Activated CD4-positive, alpha-beta T cell treated with anti-CD3 and anti-CD28 coated beads for 36 hours (primary cell): ENCODE measurements at regions of chr12 and their contacts with region 1.

Region 1: GRCh38 chr12:49018261-49019119 is at the start of gene PRKAG1:
- DNase-seq: peak; percentile 97
- ATAC-seq: peak; percentile 87
- H3K4me3 Mint-ChIP-seq: peak within 1 kb of the TSS; percentile 81
- H3K27ac Mint-ChIP-seq: peak within 1 kb of the TSS; percentile 97
- H3K4me1 Mint-ChIP-seq: peaks cover 34% of the 10 kb centered on the region
- H3K27me3 Mint-ChIP-seq: no peaks in the 10 kb centered on the region
- total RNA-seq, gene PRKAG1: 54.5 to 62.6 TPM

Region 2: GRCh38 chr12:48838048-48838447 is 180.4 kb before region 1 on chr12:
- CTCF ChIA-PET with region 1: no interaction called
- POLR2A ChIA-PET with region 1: no interaction called
- intact Hi-C with region 1: no loop called
- DNase-seq: no peak
- ATAC-seq: no peak
- H3K4me3 Mint-ChIP-seq: no peak overlapping the region
- H3K27ac Mint-ChIP-seq: no peak overlapping the region
- H3K4me1 Mint-ChIP-seq: no peaks in the 10 kb centered on the region
- H3K27me3 Mint-ChIP-seq: no peaks in the 10 kb centered on the region

Region 3: GRCh38 chr12:48924617-48925303 is 93.7 kb before region 1 on chr12:
- CTCF ChIA-PET with region 1: interaction called, 3 read pairs
- POLR2A ChIA-PET with region 1: no interaction called
- intact Hi-C with region 1: loop called in 1 of 2 experiments (anchors 2 kb)
- DNase-seq: peak; percentile 85
- ATAC-seq: peak; percentile 75
- H3K4me3 Mint-ChIP-seq: peak overlapping the region; percentile 83
- H3K27ac Mint-ChIP-seq: peak overlapping the region; percentile 93
- H3K4me1 Mint-ChIP-seq: peaks cover 52% of the 10 kb centered on the region
- H3K27me3 Mint-ChIP-seq: no peaks in the 10 kb centered on the region

Region 4: GRCh38 chr12:49000346-49000745 is 18.1 kb before region 1 on chr12:
- CTCF ChIA-PET with region 1: interaction called, 20 read pairs
- POLR2A ChIA-PET with region 1: interaction called, 4 read pairs
- intact Hi-C with region 1: loop called (anchors 1 to 2 kb)
- DNase-seq: no peak
- ATAC-seq: no peak
- H3K4me3 Mint-ChIP-seq: no peak overlapping the region
- H3K27ac Mint-ChIP-seq: no peak overlapping the region
- H3K4me1 Mint-ChIP-seq: peaks cover 22% of the 10 kb centered on the region
- H3K27me3 Mint-ChIP-seq: peaks cover 37% of the 10 kb centered on the region

Region 5: DNA sequence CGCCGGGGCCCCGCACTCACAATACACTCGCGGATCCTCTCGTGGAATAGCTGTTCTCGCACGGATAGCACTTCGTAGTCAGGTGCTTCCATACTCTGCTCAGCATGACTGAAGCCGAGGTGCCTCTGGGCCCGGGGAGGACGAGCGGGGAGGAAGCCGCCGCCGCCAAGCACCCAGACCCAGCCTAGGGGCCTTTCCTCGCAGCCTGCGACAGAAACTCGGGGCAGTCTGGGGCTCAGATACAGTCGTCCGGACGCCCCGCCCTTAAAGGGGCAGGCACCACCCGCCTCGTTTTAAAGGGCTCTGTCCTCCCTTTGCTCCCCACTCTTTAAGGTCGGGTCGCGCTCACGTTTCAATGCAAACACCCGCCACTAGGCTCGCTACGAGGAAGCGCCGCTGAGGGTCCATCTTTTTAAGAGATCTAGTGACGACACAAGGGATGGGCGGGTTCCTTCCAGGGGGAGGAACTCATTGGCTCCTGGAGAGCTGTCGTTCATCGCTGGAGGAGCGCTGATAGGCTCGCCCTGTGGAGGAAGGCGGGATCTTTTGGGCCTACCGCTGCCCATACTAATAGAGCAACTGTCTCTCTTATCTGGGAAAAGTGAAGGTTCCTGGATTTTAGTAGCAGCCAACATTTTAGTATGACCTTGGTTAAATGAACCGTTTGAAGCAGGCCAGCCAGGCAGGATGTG is 92.1 kb after region 1 on chr12 and contains the start of gene LMBR1L:
- CTCF ChIA-PET with region 1: interaction called, 3 read pairs
- POLR2A ChIA-PET with region 1: no interaction called
- intact Hi-C with region 1: loop called in 1 of 2 experiments (anchors 1 kb)
- DNase-seq: peak; percentile 97
- ATAC-seq: peak; percentile 98
- H3K4me3 Mint-ChIP-seq: peak within 1 kb of the TSS; percentile 96
- H3K27ac Mint-ChIP-seq: peak within 1 kb of the TSS; percentile 98
- H3K4me1 Mint-ChIP-seq: peaks cover 29% of the 10 kb centered on the region
- H3K27me3 Mint-ChIP-seq: no peaks in the 10 kb centered on the region
- total RNA-seq, gene LMBR1L: 45.0 to 48.0 TPM

Region 6: DNA sequence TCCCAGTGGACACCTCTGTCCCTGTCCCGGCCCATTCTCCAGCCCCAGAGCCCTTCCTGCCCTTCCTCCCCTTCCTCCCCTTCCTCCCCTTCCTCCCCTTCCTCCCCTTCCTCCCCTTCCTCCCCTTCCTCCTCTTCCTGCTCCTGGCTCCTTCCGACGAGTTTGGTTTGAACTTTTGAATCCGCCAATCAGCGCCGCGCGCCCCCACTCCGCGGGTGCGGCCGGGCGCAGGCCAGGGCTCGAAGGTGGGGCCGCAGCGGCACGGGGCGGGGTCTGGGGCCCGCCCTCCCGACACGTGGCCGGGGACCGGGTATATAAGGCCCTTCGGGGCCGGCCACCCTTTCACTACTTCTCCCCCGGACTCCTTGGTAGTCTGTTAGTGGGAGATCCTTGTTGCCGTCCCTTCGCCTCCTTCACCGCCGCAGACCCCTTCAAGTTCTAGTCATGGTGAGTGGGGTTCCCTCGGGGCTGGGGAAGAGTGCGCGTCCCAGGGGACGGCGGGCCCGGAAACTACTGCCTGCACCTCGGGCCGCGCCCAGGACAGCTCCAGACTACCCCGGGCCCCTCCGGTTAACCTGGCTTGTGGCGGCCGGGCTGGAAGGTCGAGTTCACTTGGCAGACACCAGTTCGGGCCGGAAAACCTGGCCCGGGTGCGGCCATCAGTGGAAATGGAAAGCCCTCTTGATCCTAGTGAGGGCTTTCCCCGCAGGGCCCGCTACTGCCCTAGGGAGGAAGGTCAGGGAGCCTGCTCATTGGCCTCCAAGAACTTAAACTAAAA is 246.4 kb after region 1 on chr12 and contains the start of gene TUBA1C:
- CTCF ChIA-PET with region 1: no interaction called
- POLR2A ChIA-PET with region 1: no interaction called
- intact Hi-C with region 1: loop called in 1 of 2 experiments (anchors 1 kb)
- DNase-seq: peak; percentile 95
- ATAC-seq: peak; percentile 90
- H3K4me3 Mint-ChIP-seq: peak within 1 kb of the TSS; percentile 93
- H3K27ac Mint-ChIP-seq: peak within 1 kb of the TSS; percentile 96
- H3K4me1 Mint-ChIP-seq: peaks cover 47% of the 10 kb centered on the region
- H3K27me3 Mint-ChIP-seq: no peaks in the 10 kb centered on the region
- total RNA-seq, gene TUBA1C: 276 to 338 TPM